ENCODE measurements at regions of chrX and their contacts with region 1.

Region 1: GRCh38 chrX:51420610-51421009 is 75.8 kb downstream of the NUDT11 start:
- DNase-seq: peak; percentile 45
- ATAC-seq: peak; percentile 46; the same call in 1 of the 2 replicates
- H3K4me3 ChIP-seq: no peak overlapping the region
- H3K27ac ChIP-seq: no peak overlapping the region
- H3K4me1 ChIP-seq: no peaks in the 10 kb centered on the region
- H3K27me3 ChIP-seq: peaks cover 3% of the 10 kb centered on the region; the same call in 1 of the 2 replicates
- CTCF ChIP-seq: peak; percentile 65
- POLR2A ChIP-seq: no peak
- RAD21 ChIP-seq: peak; percentile 41; the same call in 1 of the 2 replicates

Region 2: DNA sequence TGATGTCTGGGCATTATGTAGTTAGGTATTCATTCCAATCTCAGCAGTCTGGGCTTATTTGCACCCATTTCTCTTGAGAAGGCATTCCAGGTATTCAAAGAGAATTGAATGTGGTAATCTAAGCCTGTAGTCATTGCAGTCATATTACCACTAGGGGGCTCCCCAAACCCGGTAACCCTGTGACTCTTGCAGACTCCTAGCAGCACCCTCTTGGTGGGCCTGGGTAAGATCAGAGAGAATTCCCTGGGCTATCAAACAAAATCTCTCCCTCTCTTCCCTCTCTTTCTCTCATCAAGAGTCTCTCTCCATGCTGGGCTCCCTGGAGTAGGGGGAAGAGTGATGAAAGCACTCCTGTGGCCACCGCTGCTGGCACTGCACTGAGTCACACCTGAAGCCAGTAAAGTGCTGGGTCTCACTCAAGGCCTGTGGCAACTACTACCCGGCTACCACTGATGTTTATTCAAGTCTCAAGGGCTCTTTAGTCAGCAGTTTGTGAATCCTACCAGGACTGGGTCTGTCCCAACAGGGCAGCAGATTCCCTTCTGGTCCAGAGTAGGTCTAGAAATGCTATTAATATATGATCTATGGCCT is 275.7 kb before region 1 on chrX:
- CTCF ChIA-PET with region 1: no interaction called
- POLR2A ChIA-PET with region 1: no interaction called
- dilution Hi-C with region 1: no loop called
- in situ Hi-C with region 1: no loop called
- intact Hi-C with region 1: loop called (anchors 5 kb)
- DNase-seq: peak; percentile 10
- ATAC-seq: peak; percentile 48; the same call in 1 of the 2 replicates
- H3K4me3 ChIP-seq: no peak overlapping the region
- H3K27ac ChIP-seq: no peak overlapping the region
- H3K4me1 ChIP-seq: no peaks in the 10 kb centered on the region
- H3K27me3 ChIP-seq: no peaks in the 10 kb centered on the region
- CTCF ChIP-seq: peak; percentile 51
- POLR2A ChIP-seq: no peak
- RAD21 ChIP-seq: peak; percentile 35